ENCODE measurements at regions of chr1 and their contacts with region 1.

Region 1: GRCh38 chr1:151281969-151282882 is at the start of gene ZNF687:
- DNase-seq: peak; percentile 100
- H3K4me3 Mint-ChIP-seq: peak within 1 kb of the TSS; percentile 98
- H3K27ac Mint-ChIP-seq: peak within 1 kb of the TSS; percentile 99
- H3K4me1 Mint-ChIP-seq: peaks cover 35% of the 10 kb centered on the region
- H3K27me3 Mint-ChIP-seq: no peaks in the 10 kb centered on the region
- total RNA-seq, gene ZNF687: 20.9 to 22.0 TPM

Region 2: GRCh38 chr1:151198255-151199127 is 83.7 kb before region 1 on chr1 and contains the start of gene PIP5K1A:
- CTCF ChIA-PET with region 1: interaction called, 3 read pairs
- intact Hi-C with region 1: loop called (anchors 1 kb)
- DNase-seq: peak; percentile 99
- H3K4me3 Mint-ChIP-seq: peak within 1 kb of the TSS; percentile 99
- H3K27ac Mint-ChIP-seq: peak within 1 kb of the TSS; percentile 99
- H3K4me1 Mint-ChIP-seq: peaks cover 39% of the 10 kb centered on the region
- H3K27me3 Mint-ChIP-seq: no peaks in the 10 kb centered on the region
- total RNA-seq, gene PIP5K1A: 72.6 to 82.5 TPM

Region 3: GRCh38 chr1:151327223-151327902 is 45.1 kb after region 1 on chr1 and contains the start of gene PI4KB:
- CTCF ChIA-PET with region 1: interaction called, 5 read pairs
- intact Hi-C with region 1: loop called (anchors 1 kb)
- DNase-seq: peak; percentile 96
- H3K4me3 Mint-ChIP-seq: peak within 1 kb of the TSS; percentile 93
- H3K27ac Mint-ChIP-seq: peak within 1 kb of the TSS; percentile 96
- H3K4me1 Mint-ChIP-seq: peaks cover 35% of the 10 kb centered on the region
- H3K27me3 Mint-ChIP-seq: no peaks in the 10 kb centered on the region
- total RNA-seq, gene PI4KB: 64.1 to 69.2 TPM

Region 4: GRCh38 chr1:151399890-151400495 is 117.8 kb after region 1 on chr1:
- CTCF ChIA-PET with region 1: interaction called, 3 read pairs
- intact Hi-C with region 1: loop called (anchors 1 kb)
- DNase-seq: peak; percentile 40
- H3K4me3 Mint-ChIP-seq: peak overlapping the region; percentile 84
- H3K27ac Mint-ChIP-seq: peak overlapping the region; percentile 94
- H3K4me1 Mint-ChIP-seq: peaks cover 26% of the 10 kb centered on the region
- H3K27me3 Mint-ChIP-seq: no peaks in the 10 kb centered on the region

Region 5: DNA sequence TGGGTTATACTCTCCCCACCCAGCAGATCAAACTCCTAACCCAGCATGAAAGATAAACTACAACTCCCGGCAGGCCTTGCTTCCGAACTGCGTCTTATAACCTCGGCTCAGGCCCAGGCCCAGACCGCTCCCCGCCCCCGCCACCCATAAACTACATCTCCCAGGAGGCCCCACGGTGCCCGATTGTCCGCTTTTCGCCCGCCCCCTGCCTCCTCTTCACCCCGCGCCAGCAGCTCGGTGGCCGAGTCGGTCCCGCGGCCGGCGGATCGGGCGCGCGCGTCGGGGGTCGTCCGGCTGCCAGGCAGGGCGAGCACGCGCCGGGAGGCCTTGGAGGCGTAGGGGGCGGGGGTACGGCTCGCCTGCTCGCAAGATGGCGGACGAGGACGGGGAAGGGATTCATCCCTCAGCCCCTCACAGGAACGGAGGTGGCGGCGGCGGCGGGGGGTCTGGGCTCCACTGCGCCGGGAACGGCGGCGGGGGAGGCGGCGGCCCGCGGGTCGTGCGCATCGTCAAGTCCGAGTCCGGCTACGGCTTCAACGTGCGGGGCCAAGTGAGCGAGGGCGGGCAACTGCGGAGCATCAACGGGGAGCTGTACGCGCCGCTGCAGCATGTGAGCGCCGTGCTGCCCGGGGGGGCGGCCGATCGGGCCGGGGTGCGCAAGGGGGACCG is 329.7 kb after region 1 on chr1 and contains the start of gene SNX27:
- CTCF ChIA-PET with region 1: no interaction called
- intact Hi-C with region 1: loop called (anchors 10 kb)
- DNase-seq: peak; percentile 94
- H3K4me3 Mint-ChIP-seq: peak within 1 kb of the TSS; percentile 93
- H3K27ac Mint-ChIP-seq: peak within 1 kb of the TSS; percentile 72
- H3K4me1 Mint-ChIP-seq: peaks cover 48% of the 10 kb centered on the region
- H3K27me3 Mint-ChIP-seq: peaks cover 3% of the 10 kb centered on the region
- total RNA-seq, gene SNX27: 22.9 to 23.6 TPM

Region 6: DNA sequence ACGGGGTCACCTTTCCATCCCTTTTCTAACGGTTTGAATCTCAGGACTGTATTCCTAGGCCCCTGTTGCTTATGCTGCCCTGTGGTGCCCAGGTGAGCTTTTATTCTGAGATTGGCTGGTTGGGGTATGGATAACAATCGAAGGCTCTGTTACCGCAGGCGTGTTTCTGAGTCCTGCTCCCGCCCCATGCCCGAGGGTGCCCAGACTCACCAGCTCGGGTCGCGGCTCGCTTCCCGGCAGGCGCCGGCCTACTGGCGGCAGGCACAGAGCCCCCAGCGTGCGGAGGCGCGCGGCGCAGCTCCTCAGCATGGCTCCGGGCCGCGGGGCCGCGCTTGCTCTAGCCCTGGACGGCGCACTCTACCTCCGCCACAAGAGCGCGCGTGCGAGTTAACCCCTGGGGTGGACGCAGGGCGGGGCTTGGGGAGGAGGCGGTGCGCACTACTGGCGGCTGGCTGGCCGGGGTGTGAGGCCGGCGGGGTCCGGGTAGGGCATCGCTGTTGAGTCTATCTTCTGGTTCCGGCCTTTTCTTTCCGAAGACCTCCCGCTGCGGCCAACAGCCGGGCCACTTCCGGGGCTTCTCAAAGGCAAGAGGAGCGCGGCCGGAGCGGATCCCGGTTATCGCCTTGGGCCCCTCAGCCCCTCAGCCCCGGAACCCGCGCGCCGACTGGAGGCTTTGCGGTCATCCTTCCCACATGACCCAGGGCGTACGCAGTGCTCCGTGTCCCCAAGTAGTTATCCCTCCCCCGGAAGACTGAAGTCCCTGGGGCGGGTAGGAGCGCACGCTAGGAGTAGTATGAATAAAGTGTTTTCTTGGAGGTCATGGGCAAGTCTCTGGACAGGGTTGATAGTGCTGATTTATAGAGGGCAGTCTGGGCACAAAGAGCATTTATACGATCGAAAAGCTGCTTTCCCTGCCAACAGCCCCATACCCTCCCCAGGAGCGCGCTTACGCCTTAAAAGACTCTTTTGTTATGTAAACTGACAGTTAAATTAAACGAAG is 627.2 kb after region 1 on chr1 and contains the start of gene THEM4:
- CTCF ChIA-PET with region 1: no interaction called
- intact Hi-C with region 1: loop called (anchors 5 kb)
- DNase-seq: peak; percentile 97
- H3K4me3 Mint-ChIP-seq: peak within 1 kb of the TSS; percentile 75
- H3K27ac Mint-ChIP-seq: peak within 1 kb of the TSS; percentile 81
- H3K4me1 Mint-ChIP-seq: peaks cover 36% of the 10 kb centered on the region
- H3K27me3 Mint-ChIP-seq: no peaks in the 10 kb centered on the region
- total RNA-seq, gene THEM4: 20.1 to 22.0 TPM

Measured in activated naive CD4-positive, alpha-beta T cell treated with anti-CD3 and anti-CD28 coated beads for 36 hours (primary cell).